Posterior vena cava (tissue), 2 donors: ENCODE measurements at regions of chr4 and their contacts with region 1.

Region 1: GRCh38 chr4:35038081-35038805 is 1206.1 kb downstream of the ARAP2 start:
- DNase-seq: no peak

Region 2: DNA sequence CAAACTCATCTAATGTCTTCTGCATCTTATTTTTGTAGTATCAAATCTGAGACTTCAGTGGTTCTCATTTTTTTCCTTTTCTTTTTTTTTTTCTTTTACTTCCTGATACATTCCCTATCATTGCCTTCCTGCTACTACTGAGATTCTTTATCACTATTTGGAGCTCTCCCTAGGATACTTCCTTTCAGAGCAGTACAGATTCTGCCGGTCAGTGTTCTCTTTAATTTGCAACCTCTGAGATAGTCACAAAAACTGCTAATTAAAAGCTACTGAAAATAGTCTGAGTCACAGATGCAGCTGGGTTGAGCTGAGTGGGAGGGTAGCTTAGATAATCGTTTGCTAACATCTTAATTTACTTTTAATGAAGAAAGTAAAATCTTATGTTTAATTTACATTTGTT is 73.6 kb before region 1 on chr4:
- intact Hi-C with region 1: no loop called
- DNase-seq: no peak

Region 3: DNA sequence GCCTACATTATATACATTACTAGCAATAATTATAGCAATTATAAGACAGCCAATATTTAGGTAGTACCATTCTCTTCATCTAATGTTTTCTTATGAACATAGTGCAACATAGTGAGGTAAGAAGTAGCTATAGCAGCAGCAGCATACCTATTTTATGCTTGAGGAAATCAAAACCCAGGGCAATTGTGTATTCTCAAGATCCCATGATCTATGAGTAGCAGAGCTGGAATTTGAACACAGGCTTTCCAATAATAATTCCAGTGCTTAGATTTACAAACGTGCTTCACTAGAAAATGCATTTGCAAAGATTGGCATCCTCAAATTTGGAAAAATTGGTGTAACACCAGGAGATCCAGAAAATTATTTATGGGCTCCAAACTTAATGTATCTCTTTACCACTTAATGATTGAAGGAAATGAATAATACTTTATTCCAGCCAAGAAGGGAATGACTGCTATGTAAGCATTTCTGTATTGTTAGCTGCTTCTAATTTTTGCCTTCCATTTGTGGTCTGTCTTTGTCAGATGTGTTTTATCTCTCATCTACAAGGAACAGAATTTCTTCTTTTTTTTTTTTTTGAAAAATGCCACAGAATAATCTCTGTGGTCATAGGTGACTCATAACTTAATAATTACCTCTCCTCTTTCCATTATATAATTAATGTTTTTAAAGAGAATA is 754.9 kb after region 1 on chr4:
- intact Hi-C with region 1: loop called in 1 of 2 experiments (anchors 5 kb)
- DNase-seq: no peak